ENCODE measurements at regions of chr3 and their contacts with region 1.

Region 1: DNA sequence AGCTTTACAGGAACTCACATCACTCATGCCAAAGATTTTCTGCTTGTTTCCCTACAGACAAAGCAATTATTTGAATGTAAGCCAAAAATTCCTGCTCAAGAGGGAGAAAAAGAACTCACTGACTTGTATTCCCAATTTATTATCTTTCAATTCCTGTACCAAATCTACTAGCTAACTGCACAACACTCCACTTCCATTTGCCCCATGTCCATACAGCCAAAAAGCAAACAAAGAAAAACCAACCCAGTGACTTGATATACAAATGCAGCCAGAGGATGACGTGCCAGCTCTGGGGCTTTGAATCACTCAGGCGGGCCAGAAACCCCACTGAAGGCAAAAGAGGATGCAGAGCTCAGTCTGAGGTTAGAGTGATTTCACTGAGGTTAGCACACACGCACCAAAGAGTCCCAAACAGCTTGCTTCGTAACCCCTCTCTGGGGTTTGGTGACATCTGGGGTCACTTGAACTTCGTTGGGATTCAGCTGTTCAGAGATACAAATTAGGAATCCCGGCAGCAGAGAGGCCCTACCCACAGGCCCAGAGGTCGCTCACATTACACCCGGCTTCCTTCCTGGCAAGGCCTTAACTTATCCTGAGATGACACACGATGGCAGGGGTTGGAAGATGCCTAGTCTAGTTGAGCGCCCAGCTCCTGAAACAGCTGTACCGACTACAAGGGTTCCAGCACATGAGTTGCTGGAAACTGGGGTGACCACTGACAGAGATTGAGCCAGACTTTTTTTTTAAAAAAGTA is 1.6 kb downstream of the RFTN1 start:
- DNase-seq: peak; percentile 59 to 97 (median 78)
- ATAC-seq: peak; percentile 75
- H3K4me3 ChIP-seq: peak overlapping the region; percentile 86 to 92
- H3K4me3 Mint-ChIP-seq: peak overlapping the region; percentile 96
- H3K27ac ChIP-seq: peak overlapping the region; percentile 78 to 92
- H3K27ac Mint-ChIP-seq: peak overlapping the region; percentile 86
- H3K4me1 ChIP-seq: peaks cover 79% of the 10 kb centered on the region
- H3K4me1 Mint-ChIP-seq: peaks cover 85% of the 10 kb centered on the region
- H3K27me3 ChIP-seq: no peaks in the 10 kb centered on the region
- H3K27me3 Mint-ChIP-seq: no peaks in the 10 kb centered on the region
- CTCF ChIP-seq: no peak

Region 2: DNA sequence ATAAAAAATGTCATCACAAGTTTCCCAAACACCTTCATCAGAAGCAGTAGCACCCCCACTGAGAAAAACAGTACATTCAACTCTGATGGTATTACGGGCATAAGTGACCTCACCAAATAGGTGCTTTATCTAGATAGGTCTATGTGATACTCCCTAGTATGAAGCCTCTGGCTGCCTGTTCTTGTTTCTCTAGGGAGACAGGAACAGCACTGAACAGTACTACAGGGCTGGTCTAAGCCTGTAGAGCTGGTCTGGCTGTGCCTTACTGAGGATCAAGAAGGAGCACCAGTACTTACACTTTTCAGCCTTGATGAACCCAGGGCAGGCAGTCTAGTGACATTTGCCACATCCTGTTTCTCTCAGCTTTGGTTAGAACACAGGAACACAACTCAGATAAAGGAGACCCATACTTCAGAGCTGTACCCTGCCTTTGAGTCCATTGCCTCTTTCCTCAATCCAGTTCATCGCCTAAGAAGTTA is 210.9 kb before region 1 on chr3:
- CTCF ChIA-PET with region 1: no interaction called
- POLR2A ChIA-PET with region 1: interaction called, 9 read pairs
- intact Hi-C with region 1: loop called in 1 of 2 experiments (anchors 5 kb)
- DNase-seq: peak in 8 of 9 experiments; percentile 44 to 89 (median 65)
- ATAC-seq: peak; percentile 66
- H3K4me3 ChIP-seq: peak overlapping the region; percentile 20 to 32
- H3K4me3 Mint-ChIP-seq: peak overlapping the region; percentile 87
- H3K27ac ChIP-seq: peak overlapping the region; percentile 37 to 74
- H3K27ac Mint-ChIP-seq: peak overlapping the region; percentile 95
- H3K4me1 ChIP-seq: peaks cover 94% of the 10 kb centered on the region
- H3K4me1 Mint-ChIP-seq: peaks cover 95% of the 10 kb centered on the region
- H3K27me3 ChIP-seq: no peaks in the 10 kb centered on the region
- H3K27me3 Mint-ChIP-seq: no peaks in the 10 kb centered on the region
- CTCF ChIP-seq: no peak

Region 3: GRCh38 chr3:16369885-16370284 is 142.0 kb before region 1 on chr3:
- CTCF ChIA-PET with region 1: no interaction called
- POLR2A ChIA-PET with region 1: no interaction called
- intact Hi-C with region 1: no loop called
- DNase-seq: no peak
- ATAC-seq: no peak
- H3K4me3 ChIP-seq: no peak overlapping the region
- H3K4me3 Mint-ChIP-seq: no peak overlapping the region
- H3K27ac ChIP-seq: no peak overlapping the region
- H3K27ac Mint-ChIP-seq: peak overlapping the region; percentile 20
- H3K4me1 ChIP-seq: peaks cover 21% of the 10 kb centered on the region
- H3K4me1 Mint-ChIP-seq: peaks cover 72% of the 10 kb centered on the region
- H3K27me3 ChIP-seq: no peaks in the 10 kb centered on the region
- H3K27me3 Mint-ChIP-seq: no peaks in the 10 kb centered on the region
- CTCF ChIP-seq: no peak

Region 4: GRCh38 chr3:16467393-16467792 is 44.5 kb before region 1 on chr3:
- CTCF ChIA-PET with region 1: interaction called, 5 read pairs
- POLR2A ChIA-PET with region 1: interaction called, 4 read pairs
- intact Hi-C with region 1: loop called (anchors 2 to 5 kb)
- DNase-seq: peak in 5 of 9 experiments; percentile 20 to 85 (median 60)
- ATAC-seq: peak; percentile 66
- H3K4me3 ChIP-seq: no peak overlapping the region
- H3K4me3 Mint-ChIP-seq: peak overlapping the region; percentile 69
- H3K27ac ChIP-seq: peak overlapping the region; percentile 44 to 48
- H3K27ac Mint-ChIP-seq: peak overlapping the region; percentile 93
- H3K4me1 ChIP-seq: peaks cover 42% of the 10 kb centered on the region
- H3K4me1 Mint-ChIP-seq: peaks cover 70% of the 10 kb centered on the region
- H3K27me3 ChIP-seq: no peaks in the 10 kb centered on the region
- H3K27me3 Mint-ChIP-seq: no peaks in the 10 kb centered on the region
- CTCF ChIP-seq: no peak

Region 5: GRCh38 chr3:16496408-16497222 is 15.2 kb before region 1 on chr3:
- CTCF ChIA-PET with region 1: interaction called, 5 read pairs
- POLR2A ChIA-PET with region 1: interaction called, 8 read pairs
- intact Hi-C with region 1: loop called in 1 of 2 experiments (anchors 1 kb)
- DNase-seq: peak in 1 of 9 experiments; percentile 52
- ATAC-seq: peak; percentile 49
- H3K4me3 ChIP-seq: no peak overlapping the region
- H3K4me3 Mint-ChIP-seq: peak overlapping the region; percentile 32
- H3K27ac ChIP-seq: peak overlapping the region in 1 of 2 experiments; percentile 57
- H3K27ac Mint-ChIP-seq: peak overlapping the region; percentile 82
- H3K4me1 ChIP-seq: peaks cover 50% of the 10 kb centered on the region
- H3K4me1 Mint-ChIP-seq: peaks cover 66% of the 10 kb centered on the region
- H3K27me3 ChIP-seq: no peaks in the 10 kb centered on the region
- H3K27me3 Mint-ChIP-seq: no peaks in the 10 kb centered on the region
- CTCF ChIP-seq: no peak

Region 6: DNA sequence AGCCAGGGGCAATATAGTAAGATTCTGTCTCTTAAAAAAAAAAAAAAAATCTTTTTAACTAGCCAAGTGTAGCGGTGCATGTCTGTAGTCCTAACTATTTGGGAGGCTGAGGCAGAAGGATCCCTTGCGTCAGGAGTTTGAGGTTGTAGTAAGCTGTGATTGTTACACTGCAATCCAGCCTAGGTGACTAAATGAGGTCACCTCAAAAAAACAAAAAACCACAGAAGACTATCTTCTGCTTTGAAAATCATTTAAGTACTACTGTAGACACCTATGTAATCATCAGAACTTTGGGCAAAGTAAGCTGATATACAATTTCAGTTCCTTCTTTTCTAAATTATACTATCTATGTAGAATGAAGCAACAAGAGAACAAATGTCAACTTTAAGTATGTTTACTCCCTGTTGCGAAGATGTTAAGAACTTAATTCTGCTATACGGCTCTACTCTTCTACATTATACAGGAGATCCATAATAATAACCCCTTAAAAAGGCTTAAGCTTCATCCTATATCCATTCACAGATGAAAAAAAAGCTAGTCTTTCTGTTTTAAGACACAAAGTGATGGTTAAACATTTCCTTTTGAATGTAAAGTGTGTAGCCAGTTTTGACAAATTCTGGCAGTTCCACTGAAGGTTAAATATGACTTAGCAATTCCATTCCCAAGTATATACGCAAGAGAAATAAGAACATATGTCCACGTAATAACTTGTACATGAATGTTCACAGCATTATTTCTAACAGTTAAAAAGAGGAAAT is 78.2 kb after region 1 on chr3:
- CTCF ChIA-PET with region 1: no interaction called
- POLR2A ChIA-PET with region 1: no interaction called
- intact Hi-C with region 1: no loop called
- DNase-seq: no peak
- ATAC-seq: no peak
- H3K4me3 ChIP-seq: no peak overlapping the region
- H3K4me3 Mint-ChIP-seq: no peak overlapping the region
- H3K27ac ChIP-seq: no peak overlapping the region
- H3K27ac Mint-ChIP-seq: no peak overlapping the region
- H3K4me1 ChIP-seq: no peaks in the 10 kb centered on the region
- H3K4me1 Mint-ChIP-seq: no peaks in the 10 kb centered on the region
- H3K27me3 ChIP-seq: no peaks in the 10 kb centered on the region
- H3K27me3 Mint-ChIP-seq: no peaks in the 10 kb centered on the region
- CTCF ChIP-seq: no peak

Region 7: DNA sequence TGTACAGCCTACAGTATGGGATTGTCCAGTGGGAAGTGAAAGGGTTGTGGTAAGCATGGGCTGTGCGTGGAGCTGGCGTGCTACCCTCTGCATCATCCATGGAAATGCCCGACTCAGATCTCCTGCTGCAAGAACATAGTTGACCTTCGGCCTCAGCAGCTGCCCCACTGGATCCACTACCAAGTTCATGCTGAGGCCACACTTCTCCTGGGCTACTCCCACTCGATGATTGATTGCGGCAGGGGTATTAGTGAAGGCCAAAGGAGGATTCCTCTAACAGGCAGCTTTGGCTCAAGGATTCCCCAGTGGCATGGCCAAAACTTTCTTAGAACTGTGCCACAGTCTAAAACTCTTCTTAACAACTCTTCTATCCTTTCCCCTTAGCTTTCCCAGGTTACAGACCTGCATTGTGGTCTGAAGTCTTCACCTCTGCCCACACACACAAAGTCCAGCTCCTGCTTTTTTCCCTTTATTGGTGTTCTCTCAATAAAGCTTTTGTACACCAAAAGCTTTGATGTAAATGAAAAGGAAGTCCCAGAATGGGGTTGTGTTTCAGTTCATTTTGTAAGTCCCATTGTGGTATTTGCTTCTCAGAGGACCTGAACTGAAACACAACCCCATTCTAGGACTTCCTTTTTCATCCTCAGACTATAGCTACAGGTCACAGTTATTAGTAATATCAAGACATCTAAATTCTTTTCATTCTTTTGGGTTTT is 1235.5 kb after region 1 on chr3:
- CTCF ChIA-PET with region 1: no interaction called
- POLR2A ChIA-PET with region 1: no interaction called
- intact Hi-C with region 1: loop called in 1 of 2 experiments (anchors 5 kb)
- DNase-seq: no peak
- ATAC-seq: no peak
- H3K4me3 ChIP-seq: no peak overlapping the region
- H3K4me3 Mint-ChIP-seq: no peak overlapping the region
- H3K27ac ChIP-seq: no peak overlapping the region
- H3K27ac Mint-ChIP-seq: no peak overlapping the region
- H3K4me1 ChIP-seq: peaks cover 11% of the 10 kb centered on the region
- H3K4me1 Mint-ChIP-seq: peaks cover 21% of the 10 kb centered on the region
- H3K27me3 ChIP-seq: no peaks in the 10 kb centered on the region
- H3K27me3 Mint-ChIP-seq: no peaks in the 10 kb centered on the region
- CTCF ChIP-seq: no peak

Region 8: GRCh38 chr3:18027161-18027939 is 1515.5 kb after region 1 on chr3:
- CTCF ChIA-PET with region 1: no interaction called
- POLR2A ChIA-PET with region 1: no interaction called
- intact Hi-C with region 1: no loop called
- DNase-seq: no peak
- ATAC-seq: no peak
- H3K4me3 ChIP-seq: no peak overlapping the region
- H3K4me3 Mint-ChIP-seq: no peak overlapping the region
- H3K27ac ChIP-seq: no peak overlapping the region
- H3K27ac Mint-ChIP-seq: no peak overlapping the region
- H3K4me1 ChIP-seq: no peaks in the 10 kb centered on the region
- H3K4me1 Mint-ChIP-seq: no peaks in the 10 kb centered on the region
- H3K27me3 ChIP-seq: no peaks in the 10 kb centered on the region
- H3K27me3 Mint-ChIP-seq: peaks cover 2% of the 10 kb centered on the region
- CTCF ChIP-seq: no peak